ENCODE measurements at regions of chr3 and their contacts with region 1.

Region 1: DNA sequence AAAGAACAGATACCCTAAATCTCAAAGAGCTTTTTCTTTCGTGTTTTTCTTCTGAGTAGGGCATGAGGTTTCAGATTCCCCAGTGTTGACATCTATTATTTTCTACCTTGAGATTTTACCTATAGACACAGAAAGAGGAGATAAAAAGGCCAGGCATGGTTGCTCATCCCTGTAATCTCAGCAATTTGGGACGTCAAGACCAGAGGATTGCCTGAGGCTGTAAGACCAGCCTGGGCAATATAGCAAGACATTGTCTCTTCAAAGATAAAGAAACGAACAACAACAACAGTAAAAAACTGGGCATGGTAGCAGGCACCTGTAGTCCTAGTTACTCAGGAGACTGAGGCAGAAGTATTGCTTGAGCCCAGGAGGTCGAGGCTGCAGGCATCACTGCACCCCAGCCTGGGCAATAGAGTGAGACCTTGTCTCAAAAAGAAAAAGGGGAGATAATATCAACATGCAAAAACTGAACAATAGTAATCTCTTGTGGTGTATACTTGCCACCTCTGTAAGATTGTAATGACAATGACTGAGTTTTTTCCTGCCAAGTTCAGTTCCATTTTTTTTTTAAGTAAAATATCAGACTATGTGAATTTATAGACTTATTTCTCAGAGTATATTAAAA is 71.3 kb downstream of the MBNL1 start:
- DNase-seq: no peak
- H3K4me3 Mint-ChIP-seq: no peak overlapping the region
- H3K27ac Mint-ChIP-seq: no peak overlapping the region
- H3K4me1 Mint-ChIP-seq: peaks cover 68% of the 10 kb centered on the region
- H3K27me3 Mint-ChIP-seq: no peaks in the 10 kb centered on the region

Region 2: GRCh38 chr3:152268555-152269425 is 71.2 kb before region 1 on chr3 and contains the start of gene MBNL1:
- CTCF ChIA-PET with region 1: no interaction called
- POLR2A ChIA-PET with region 1: no interaction called
- intact Hi-C with region 1: no loop called
- DNase-seq: peak; percentile 93
- H3K4me3 Mint-ChIP-seq: peak within 1 kb of the TSS; percentile 84
- H3K27ac Mint-ChIP-seq: peak within 1 kb of the TSS; percentile 84
- H3K4me1 Mint-ChIP-seq: peaks cover 52% of the 10 kb centered on the region
- H3K27me3 Mint-ChIP-seq: no peaks in the 10 kb centered on the region
- total RNA-seq, gene MBNL1: 290 to 302 TPM

Region 3: DNA sequence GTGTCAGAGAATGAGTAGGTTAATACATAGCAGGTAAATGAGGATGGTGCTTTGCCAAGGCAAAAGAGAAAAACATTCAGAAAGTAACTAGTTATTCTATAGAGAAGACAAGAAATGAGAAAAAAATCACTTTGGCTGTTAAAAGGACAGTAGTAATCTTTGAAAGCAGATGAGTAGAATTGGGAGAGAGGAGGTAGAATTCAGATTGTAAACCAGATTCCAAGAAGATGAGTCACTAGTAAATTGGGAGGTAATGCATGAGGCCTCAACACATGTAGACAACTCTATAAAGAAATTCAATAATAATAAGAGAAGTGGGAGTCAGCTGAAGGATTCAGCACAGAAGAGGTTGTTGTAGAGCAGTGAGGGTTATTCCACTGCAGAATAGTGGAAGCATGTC is 10.1 kb after region 1 on chr3:
- CTCF ChIA-PET with region 1: no interaction called
- POLR2A ChIA-PET with region 1: no interaction called
- intact Hi-C with region 1: loop called (anchors 1 kb)
- DNase-seq: no peak
- H3K4me3 Mint-ChIP-seq: no peak overlapping the region
- H3K27ac Mint-ChIP-seq: no peak overlapping the region
- H3K4me1 Mint-ChIP-seq: peaks cover 41% of the 10 kb centered on the region
- H3K27me3 Mint-ChIP-seq: no peaks in the 10 kb centered on the region

Measured in activated CD4-positive, alpha-beta memory T cell treated with anti-CD3 and anti-CD28 coated beads for 36 hours (primary cell).